ENCODE measurements at regions of chr3 and their contacts with region 1.

Region 1: DNA sequence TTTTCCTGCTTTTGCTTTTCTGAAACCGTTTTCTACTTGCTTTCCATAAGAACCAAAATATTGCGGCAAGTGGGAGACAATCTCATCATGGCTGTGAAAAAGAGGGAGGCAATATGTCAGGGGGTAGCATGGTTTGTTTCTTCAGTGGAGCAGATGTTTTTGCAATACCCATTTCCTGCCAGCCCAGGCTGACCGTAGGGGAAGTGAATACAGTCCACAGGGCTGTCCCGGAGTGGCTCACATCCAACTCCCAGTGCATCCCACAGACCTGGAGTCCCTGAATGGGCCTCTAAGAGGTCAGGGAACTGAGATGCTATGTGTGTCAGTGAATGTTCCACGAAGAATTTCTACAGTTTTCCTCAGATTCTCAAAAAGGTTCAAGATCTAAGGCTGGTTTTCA is 69.6 kb downstream of the EPHB1 start:
- DNase-seq: no peak
- ATAC-seq: no peak
- H3K4me3 ChIP-seq: no peak overlapping the region
- H3K27ac ChIP-seq: no peak overlapping the region
- H3K4me1 ChIP-seq: no peaks in the 10 kb centered on the region
- H3K27me3 ChIP-seq: peaks cover 1 to 8% of the 10 kb centered on the region in 2 experiments; a peak in 2 of 5 replicates
- CTCF ChIP-seq: no peak
- EP300 ChIP-seq: no peak
- POLR2A ChIP-seq: no peak
- RAD21 ChIP-seq: no peak

Region 2: DNA sequence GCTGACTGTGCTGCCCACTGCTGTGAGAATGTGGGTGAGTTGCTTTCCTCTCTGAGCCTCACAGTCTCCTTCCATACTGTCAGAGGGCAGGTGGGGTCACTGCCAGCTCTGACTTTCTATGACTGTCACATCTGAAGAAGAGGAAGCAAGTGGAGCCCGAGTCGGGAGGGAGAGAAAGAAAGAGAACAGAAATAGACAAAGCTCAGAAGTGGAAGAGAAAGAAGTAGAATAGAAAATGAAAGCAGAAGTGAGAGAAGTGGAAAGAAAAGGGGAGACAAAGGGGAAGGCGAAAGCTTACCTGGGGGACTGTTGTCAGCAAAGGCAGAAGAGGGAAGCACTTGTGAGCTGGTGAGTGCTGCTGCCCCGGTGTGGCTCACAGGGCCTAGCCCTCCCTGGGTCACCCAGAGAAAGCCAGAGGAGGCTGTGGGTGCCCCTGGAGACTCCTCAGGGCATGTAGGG is 11.7 kb before region 1 on chr3:
- CTCF ChIA-PET with region 1: no interaction called
- POLR2A ChIA-PET with region 1: no interaction called
- in situ Hi-C with region 1: no loop called
- intact Hi-C with region 1: no loop called
- DNase-seq: no peak
- ATAC-seq: no peak
- H3K4me3 ChIP-seq: no peak overlapping the region
- H3K27ac ChIP-seq: no peak overlapping the region
- H3K4me1 ChIP-seq: no peaks in the 10 kb centered on the region
- H3K27me3 ChIP-seq: no peaks in the 10 kb centered on the region; a peak in 3 of 5 replicates
- CTCF ChIP-seq: no peak
- EP300 ChIP-seq: no peak
- POLR2A ChIP-seq: no peak
- RAD21 ChIP-seq: no peak

Region 3: DNA sequence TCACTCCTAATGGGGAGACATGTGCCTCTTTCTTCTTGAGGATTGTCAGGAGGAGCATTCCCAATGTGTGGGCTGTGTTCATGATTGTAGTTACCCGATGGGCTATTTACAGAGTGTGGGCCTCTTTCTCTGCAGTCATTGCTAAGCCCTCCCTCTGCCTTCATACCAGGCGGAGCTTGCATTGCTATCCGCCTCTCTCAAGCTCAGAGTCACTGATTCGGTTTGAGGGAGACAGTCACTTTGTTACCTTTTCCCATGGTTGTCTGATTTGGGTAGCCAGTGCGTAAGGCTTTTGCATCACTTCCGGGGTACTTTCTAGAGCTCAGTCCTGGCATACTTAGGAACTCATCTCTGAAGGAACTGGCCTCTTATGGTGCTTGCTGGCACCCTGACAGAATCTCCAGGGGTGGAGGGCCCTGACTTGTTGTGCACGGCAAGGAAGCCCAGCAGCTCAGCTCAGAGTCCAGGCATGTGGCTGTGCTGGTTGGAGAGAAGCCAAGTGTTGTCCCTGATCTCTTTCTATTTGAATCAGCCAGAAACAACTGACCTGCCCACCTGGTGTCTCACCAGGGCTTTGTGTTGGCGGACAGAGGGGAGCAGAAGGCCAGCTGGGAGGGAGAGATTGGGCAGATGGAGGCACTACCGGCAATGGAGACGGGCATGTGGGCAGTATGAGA is 10.2 kb after region 1 on chr3:
- CTCF ChIA-PET with region 1: no interaction called
- POLR2A ChIA-PET with region 1: no interaction called
- in situ Hi-C with region 1: no loop called
- intact Hi-C with region 1: loop called (anchors 1 kb)
- DNase-seq: peak; percentile 27
- ATAC-seq: peak; percentile 86
- H3K4me3 ChIP-seq: no peak overlapping the region
- H3K27ac ChIP-seq: no peak overlapping the region
- H3K4me1 ChIP-seq: peaks cover 9% of the 10 kb centered on the region; the same call in 1 of the 2 replicates
- H3K27me3 ChIP-seq: no peaks in the 10 kb centered on the region
- CTCF ChIP-seq: no peak
- EP300 ChIP-seq: no peak
- POLR2A ChIP-seq: no peak
- RAD21 ChIP-seq: no peak

Region 4: DNA sequence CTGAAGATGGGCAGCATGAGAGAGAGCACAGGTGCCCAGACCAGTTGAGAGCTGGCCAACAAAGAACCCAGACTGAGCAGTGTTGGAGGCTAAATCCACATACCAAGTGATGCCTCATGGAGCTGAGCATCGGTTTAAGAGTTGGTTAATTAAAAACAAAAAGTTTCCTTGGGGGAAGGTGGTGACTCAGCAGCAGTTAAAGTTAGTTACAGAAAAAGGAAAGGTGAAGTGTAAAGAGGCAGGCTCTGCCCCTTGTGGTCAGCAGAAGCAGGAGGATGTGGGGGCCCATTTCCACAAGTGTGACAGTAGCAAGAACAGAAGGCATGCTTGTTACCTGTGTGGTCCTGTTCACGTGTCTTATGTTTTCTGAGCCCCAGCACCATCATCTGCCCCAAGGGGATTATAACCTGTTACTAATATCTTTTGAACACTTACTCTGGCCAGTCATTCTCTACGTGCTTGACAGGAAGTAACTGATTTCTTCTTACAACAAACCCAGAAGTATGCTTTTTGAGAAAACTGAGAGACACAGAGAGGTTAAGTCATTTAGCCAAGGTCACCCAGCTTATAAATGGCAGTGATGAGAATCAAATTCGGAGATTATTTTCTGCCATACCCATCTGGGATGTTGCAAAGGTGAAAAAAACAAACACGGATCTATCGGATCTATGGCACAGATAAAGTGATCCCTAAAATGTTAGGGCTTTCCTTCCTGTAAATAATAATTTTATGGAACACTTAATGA is 21.4 kb after region 1 on chr3:
- CTCF ChIA-PET with region 1: no interaction called
- POLR2A ChIA-PET with region 1: no interaction called
- in situ Hi-C with region 1: no loop called
- intact Hi-C with region 1: no loop called
- DNase-seq: no peak
- ATAC-seq: no peak
- H3K4me3 ChIP-seq: no peak overlapping the region
- H3K27ac ChIP-seq: no peak overlapping the region
- H3K4me1 ChIP-seq: no peaks in the 10 kb centered on the region
- H3K27me3 ChIP-seq: peaks cover 0 to 5% of the 10 kb centered on the region in 2 experiments; a peak in 1 of 5 replicates
- CTCF ChIP-seq: no peak
- EP300 ChIP-seq: no peak
- POLR2A ChIP-seq: no peak
- RAD21 ChIP-seq: no peak

Region 5: GRCh38 chr3:135000465-135000864 is 135.8 kb after region 1 on chr3:
- CTCF ChIA-PET with region 1: no interaction called
- POLR2A ChIA-PET with region 1: no interaction called
- in situ Hi-C with region 1: no loop called
- intact Hi-C with region 1: no loop called
- DNase-seq: no peak
- ATAC-seq: no peak
- H3K4me3 ChIP-seq: no peak overlapping the region
- H3K27ac ChIP-seq: no peak overlapping the region
- H3K4me1 ChIP-seq: no peaks in the 10 kb centered on the region
- H3K27me3 ChIP-seq: no peaks in the 10 kb centered on the region; a peak in 1 of 5 replicates
- CTCF ChIP-seq: no peak
- EP300 ChIP-seq: no peak
- POLR2A ChIP-seq: no peak
- RAD21 ChIP-seq: no peak

Region 6: GRCh38 chr3:135292162-135292561 is 427.5 kb after region 1 on chr3:
- CTCF ChIA-PET with region 1: no interaction called
- POLR2A ChIA-PET with region 1: no interaction called
- in situ Hi-C with region 1: no loop called
- intact Hi-C with region 1: no loop called
- DNase-seq: no peak
- ATAC-seq: no peak
- H3K4me3 ChIP-seq: no peak overlapping the region
- H3K27ac ChIP-seq: no peak overlapping the region
- H3K4me1 ChIP-seq: no peaks in the 10 kb centered on the region
- H3K27me3 ChIP-seq: no peaks in the 10 kb centered on the region; a peak in 1 of 5 replicates
- CTCF ChIP-seq: no peak
- EP300 ChIP-seq: no peak
- POLR2A ChIP-seq: no peak
- RAD21 ChIP-seq: no peak